ENCODE measurements at regions of chr1 and their contacts with region 1.

Region 1: DNA sequence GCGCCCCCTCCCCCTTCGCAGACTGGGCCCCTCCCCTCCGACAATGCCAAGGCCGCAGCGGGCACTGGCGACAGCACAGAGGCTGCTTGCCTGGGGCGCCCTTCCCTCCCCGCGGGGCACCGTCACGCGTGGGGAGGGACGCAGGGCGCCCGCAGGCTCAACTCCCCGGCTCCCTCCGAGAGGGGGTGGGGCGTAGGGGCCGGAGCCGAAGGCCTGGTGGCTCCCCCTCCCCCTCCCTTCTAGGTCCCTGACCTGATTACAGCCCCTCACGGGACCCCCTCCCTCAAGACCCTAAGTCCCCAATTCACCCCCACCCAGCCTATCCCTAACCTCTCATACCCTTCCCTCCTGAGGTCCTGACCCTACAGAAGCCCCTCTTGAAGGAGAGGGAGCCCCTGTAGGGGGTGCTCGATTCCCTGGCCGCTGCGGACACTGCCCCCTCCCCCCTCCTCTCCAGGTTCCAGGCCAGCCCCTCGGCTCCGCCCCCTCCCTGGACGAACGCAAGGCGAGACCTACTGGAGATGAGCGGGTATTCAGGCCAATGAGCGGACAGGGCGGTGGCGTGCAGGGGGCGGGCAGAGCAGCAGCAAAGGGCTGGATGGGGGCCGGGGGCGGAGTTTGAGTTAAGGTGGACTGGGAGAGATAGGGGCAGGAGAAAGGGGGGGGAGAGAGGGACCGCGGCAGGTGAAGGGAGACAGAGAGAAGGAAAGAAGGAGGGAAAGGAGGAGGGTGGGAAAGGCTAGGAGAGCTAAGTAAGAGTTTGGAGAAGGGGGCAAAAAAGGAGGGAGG is 733 bp upstream of the ZBTB7B start:
- DNase-seq: peak; percentile 98
- ATAC-seq: peak; percentile 81
- H3K4me3 ChIP-seq: peak overlapping the region; percentile 74 to 95 (median 86)
- H3K4me3 Mint-ChIP-seq: peak overlapping the region; percentile 90
- H3K27ac ChIP-seq: peak overlapping the region; percentile 73 to 80
- H3K27ac Mint-ChIP-seq: peak overlapping the region; percentile 96
- H3K4me1 ChIP-seq: peaks cover 41 to 50% of the 10 kb centered on the region in 2 donors
- H3K4me1 Mint-ChIP-seq: peaks cover 51% of the 10 kb centered on the region
- H3K27me3 ChIP-seq: no peaks in the 10 kb centered on the region
- H3K27me3 Mint-ChIP-seq: no peaks in the 10 kb centered on the region
- CTCF ChIP-seq: no peak

Region 2: GRCh38 chr1:154607609-154608396 is 394.1 kb before region 1 on chr1 and contains the start of gene ADAR:
- CTCF ChIA-PET with region 1: no interaction called
- POLR2A ChIA-PET with region 1: no interaction called
- intact Hi-C with region 1: loop called (anchors 5 kb)
- DNase-seq: peak; percentile 96
- ATAC-seq: peak; percentile 92
- H3K4me3 ChIP-seq: peak within 1 kb of the TSS; percentile 83 to 96 (median 93)
- H3K4me3 Mint-ChIP-seq: peak within 1 kb of the TSS; percentile 98
- H3K27ac ChIP-seq: peak within 1 kb of the TSS; percentile 86 to 97
- H3K27ac Mint-ChIP-seq: peak within 1 kb of the TSS; percentile 96
- H3K4me1 ChIP-seq: peaks cover 50 to 60% of the 10 kb centered on the region in 2 donors
- H3K4me1 Mint-ChIP-seq: peaks cover 61% of the 10 kb centered on the region
- H3K27me3 ChIP-seq: no peaks in the 10 kb centered on the region
- H3K27me3 Mint-ChIP-seq: no peaks in the 10 kb centered on the region
- CTCF ChIP-seq: no peak
- total RNA-seq, gene ADAR: 221 and 241 TPM in 2 replicates

Region 3: GRCh38 chr1:154961497-154962262 is 40.2 kb before region 1 on chr1 and contains the start of gene PYGO2:
- CTCF ChIA-PET with region 1: interaction called, 34 read pairs
- POLR2A ChIA-PET with region 1: interaction called, 3 read pairs
- intact Hi-C with region 1: loop called (anchors 1 kb)
- DNase-seq: peak; percentile 93
- ATAC-seq: peak; percentile 86
- H3K4me3 ChIP-seq: peak within 1 kb of the TSS; percentile 62 to 91 (median 81)
- H3K4me3 Mint-ChIP-seq: peak within 1 kb of the TSS; percentile 91
- H3K27ac ChIP-seq: peak within 1 kb of the TSS; percentile 76 to 96
- H3K27ac Mint-ChIP-seq: peak within 1 kb of the TSS; percentile 94
- H3K4me1 ChIP-seq: peaks cover 22 to 35% of the 10 kb centered on the region in 2 donors
- H3K4me1 Mint-ChIP-seq: peaks cover 28% of the 10 kb centered on the region
- H3K27me3 ChIP-seq: no peaks in the 10 kb centered on the region
- H3K27me3 Mint-ChIP-seq: no peaks in the 10 kb centered on the region
- CTCF ChIP-seq: peak; percentile 82
- total RNA-seq, gene PYGO2: 47.5 and 52.7 TPM in 2 replicates

Region 4: GRCh38 chr1:154982897-154983648 is 18.8 kb before region 1 on chr1 and contains the start of gene FLAD1:
- CTCF ChIA-PET with region 1: interaction called, 26 read pairs
- POLR2A ChIA-PET with region 1: interaction called, 9 read pairs
- intact Hi-C with region 1: loop called (anchors 1 kb)
- DNase-seq: peak; percentile 98
- ATAC-seq: peak; percentile 99
- H3K4me3 ChIP-seq: peak within 1 kb of the TSS; percentile 58 to 93 (median 85)
- H3K4me3 Mint-ChIP-seq: no peak within 1 kb of the TSS
- H3K27ac ChIP-seq: peak within 1 kb of the TSS; percentile 30 to 84
- H3K27ac Mint-ChIP-seq: peak within 1 kb of the TSS; percentile 50
- H3K4me1 ChIP-seq: peaks cover 13 to 19% of the 10 kb centered on the region in 2 donors
- H3K4me1 Mint-ChIP-seq: peaks cover 11% of the 10 kb centered on the region
- H3K27me3 ChIP-seq: no peaks in the 10 kb centered on the region
- H3K27me3 Mint-ChIP-seq: no peaks in the 10 kb centered on the region
- CTCF ChIP-seq: no peak
- total RNA-seq, gene FLAD1: 49.6 and 51.4 TPM in 2 replicates

Region 5: GRCh38 chr1:155017041-155017945 is 15.4 kb after region 1 on chr1:
- CTCF ChIA-PET with region 1: interaction called, 295 read pairs
- POLR2A ChIA-PET with region 1: interaction called, 74 read pairs
- intact Hi-C with region 1: loop called (anchors 1 kb)
- DNase-seq: peak; percentile 93
- ATAC-seq: peak; percentile 75
- H3K4me3 ChIP-seq: peak overlapping the region; percentile 9 to 68 (median 49)
- H3K4me3 Mint-ChIP-seq: peak overlapping the region; percentile 84
- H3K27ac ChIP-seq: peak overlapping the region; percentile 88 to 89
- H3K27ac Mint-ChIP-seq: peak overlapping the region; percentile 93
- H3K4me1 ChIP-seq: peaks cover 53 to 67% of the 10 kb centered on the region in 2 donors
- H3K4me1 Mint-ChIP-seq: peaks cover 69% of the 10 kb centered on the region
- H3K27me3 ChIP-seq: no peaks in the 10 kb centered on the region
- H3K27me3 Mint-ChIP-seq: no peaks in the 10 kb centered on the region
- CTCF ChIP-seq: peak; percentile 99

Measured in B cell (primary cell).